Cardiac septum (tissue), 1 donor: ENCODE measurements at regions of chr19 and their contacts with region 1.

Region 1: DNA sequence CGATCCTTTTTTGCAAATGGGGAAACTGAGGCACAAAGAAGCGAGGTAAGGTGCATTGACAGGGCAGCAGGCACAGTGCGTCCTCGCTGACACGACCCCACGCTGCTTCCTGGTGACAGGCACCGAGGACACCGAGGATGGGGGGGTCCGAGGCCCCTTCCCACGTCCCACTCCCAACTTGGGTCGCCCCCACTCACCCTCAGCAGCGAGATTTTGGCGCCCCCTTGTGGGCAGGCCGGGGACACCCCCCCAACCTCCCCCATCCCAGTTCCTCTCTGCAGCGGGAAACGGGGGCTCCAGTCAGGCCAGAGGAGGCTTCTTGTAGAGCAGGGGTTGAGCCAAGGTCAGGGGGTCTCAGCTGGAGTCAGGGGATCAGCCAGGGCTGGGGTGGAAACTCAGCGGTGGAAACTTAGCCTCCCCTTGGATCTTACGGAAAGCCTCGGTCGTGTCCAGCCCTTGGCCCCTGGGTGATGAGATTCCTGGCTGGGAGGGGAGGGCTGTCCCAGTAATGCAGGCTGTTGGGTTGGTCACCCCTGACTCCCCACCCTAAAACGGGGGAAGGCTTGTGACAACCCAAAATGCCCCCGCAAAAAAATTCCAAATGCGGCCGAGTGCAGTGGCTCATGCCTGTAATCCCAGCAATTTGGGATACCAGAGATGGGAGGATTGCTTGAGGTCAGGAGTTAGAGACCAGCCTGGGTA is 8.2 kb downstream of the SMIM24 start:
- DNase-seq: no peak

Region 2: GRCh38 chr19:3324321-3324856 is 147.7 kb before region 1 on chr19:
- intact Hi-C with region 1: loop called (anchors 1 kb)
- DNase-seq: no peak

Region 3: DNA sequence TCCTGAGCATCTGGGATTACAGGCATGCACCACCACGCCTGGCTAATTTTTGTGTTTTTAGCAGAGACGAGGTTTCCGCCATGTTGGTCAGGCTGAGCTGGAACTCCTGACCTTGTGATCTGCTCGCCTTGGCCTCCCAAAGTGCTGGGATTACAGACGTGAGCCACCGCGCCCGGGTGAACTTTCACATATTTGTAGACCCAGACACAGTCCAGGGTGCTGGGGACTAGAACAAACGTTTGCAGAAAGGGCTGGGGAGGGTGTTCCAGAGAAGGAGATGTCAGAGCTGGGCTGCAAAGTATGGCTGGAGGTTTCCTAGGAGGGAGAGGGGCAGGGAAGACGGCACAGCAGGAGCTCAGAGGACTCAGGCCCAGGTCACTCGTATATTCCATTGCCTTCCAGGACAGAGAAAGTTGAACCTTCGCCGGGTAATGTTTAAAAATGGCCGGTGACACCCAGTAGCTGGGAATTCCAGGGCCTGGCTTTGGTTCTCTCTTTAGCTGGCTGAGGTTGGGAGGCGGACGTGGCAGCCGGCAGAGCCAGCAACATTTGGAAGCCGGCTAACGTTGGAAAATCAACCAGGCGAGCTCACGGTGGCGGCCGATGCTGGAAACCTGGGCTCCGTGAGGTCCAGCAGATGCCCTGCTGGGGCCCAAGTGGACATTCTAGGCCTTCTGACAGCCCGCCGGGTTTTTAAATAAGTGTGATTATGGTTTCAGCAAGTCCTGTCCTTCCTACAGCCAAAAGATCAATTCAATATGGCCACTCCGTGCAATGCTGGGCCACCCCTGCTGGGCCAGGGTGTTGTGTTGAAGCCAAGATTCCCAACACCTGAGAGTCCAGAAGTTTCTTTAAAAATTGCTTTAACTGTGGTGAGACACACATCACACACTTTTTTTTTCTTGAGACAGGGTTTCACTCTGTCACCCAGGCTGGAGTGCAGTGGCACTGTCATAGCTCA is 64.3 kb before region 1 on chr19:
- intact Hi-C with region 1: no loop called
- DNase-seq: no peak

Region 4: GRCh38 chr19:3434712-3435553 is 37.2 kb before region 1 on chr19:
- intact Hi-C with region 1: loop called (anchors 5 kb)
- DNase-seq: peak; percentile 98